ENCODE measurements at regions of chr3 and their contacts with region 1.

Region 1: GRCh38 chr3:42247576-42248027 is 18.4 kb downstream of the CCK start:
- DNase-seq: peak; percentile 49 to 79 (median 58)
- ATAC-seq: peak; percentile 79
- H3K4me3 ChIP-seq: no peak overlapping the region
- H3K4me3 Mint-ChIP-seq: peak overlapping the region; percentile 0
- H3K27ac ChIP-seq: no peak overlapping the region
- H3K27ac Mint-ChIP-seq: no peak overlapping the region
- H3K4me1 ChIP-seq: peaks cover 9% of the 10 kb centered on the region
- H3K4me1 Mint-ChIP-seq: peaks cover 8% of the 10 kb centered on the region
- H3K27me3 ChIP-seq: peaks cover 2 to 7% of the 10 kb centered on the region in 2 experiments
- H3K27me3 Mint-ChIP-seq: peaks cover 12% of the 10 kb centered on the region
- CTCF ChIP-seq: peak; percentile 80

Region 2: DNA sequence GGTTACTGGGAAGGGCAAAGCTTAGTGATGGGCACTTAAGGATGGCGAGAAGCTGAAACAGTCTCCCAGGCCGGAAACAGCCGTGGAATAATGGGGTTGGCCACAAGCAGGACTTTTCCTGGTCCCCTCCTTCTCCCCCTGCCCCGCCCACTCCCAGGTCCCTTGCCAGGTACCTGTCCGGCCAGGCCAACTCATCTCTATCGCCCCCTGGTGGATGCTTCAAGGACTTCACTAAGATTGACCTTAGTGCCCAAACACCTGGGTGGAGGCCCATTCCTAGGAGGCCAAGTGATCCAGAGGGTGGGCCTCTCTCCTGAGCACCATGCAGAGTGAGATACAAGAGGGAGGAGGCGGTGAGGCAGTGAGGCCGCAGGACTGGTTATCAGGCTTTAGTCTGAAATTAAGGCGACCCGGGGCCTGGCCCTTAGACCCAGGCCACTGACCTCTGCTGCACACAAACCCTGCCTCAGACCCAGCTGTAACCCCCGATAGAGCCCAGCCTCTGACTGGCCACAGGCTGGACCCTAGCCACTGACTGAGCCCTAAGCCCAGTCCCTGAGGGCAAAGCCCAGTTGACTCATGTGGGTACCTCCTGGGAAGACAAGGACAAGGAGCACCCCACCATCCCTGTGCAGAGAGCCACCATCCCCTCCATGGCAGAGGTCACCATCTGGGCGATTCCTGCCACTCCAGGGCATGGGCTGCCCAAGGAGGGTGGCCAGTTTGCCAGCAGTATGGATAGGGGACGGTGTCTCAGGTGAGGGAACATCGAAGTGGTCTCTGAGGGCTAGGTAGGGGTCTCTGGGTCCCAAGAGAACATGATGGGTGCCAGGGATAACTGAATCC is 292.5 kb after region 1 on chr3:
- CTCF ChIA-PET with region 1: no interaction called
- POLR2A ChIA-PET with region 1: no interaction called
- intact Hi-C with region 1: loop called (anchors 2 to 5 kb)
- DNase-seq: peak; percentile 39 to 81 (median 57)
- ATAC-seq: peak; percentile 71
- H3K4me3 ChIP-seq: no peak overlapping the region
- H3K4me3 Mint-ChIP-seq: no peak overlapping the region
- H3K27ac ChIP-seq: no peak overlapping the region
- H3K27ac Mint-ChIP-seq: peak overlapping the region; percentile 78
- H3K4me1 ChIP-seq: peaks cover 32% of the 10 kb centered on the region
- H3K4me1 Mint-ChIP-seq: peaks cover 29% of the 10 kb centered on the region
- H3K27me3 ChIP-seq: no peaks in the 10 kb centered on the region
- H3K27me3 Mint-ChIP-seq: no peaks in the 10 kb centered on the region
- CTCF ChIP-seq: peak; percentile 92

Region 3: GRCh38 chr3:42547401-42547945 is 299.9 kb after region 1 on chr3:
- CTCF ChIA-PET with region 1: no interaction called
- POLR2A ChIA-PET with region 1: no interaction called
- intact Hi-C with region 1: loop called (anchors 1 to 5 kb)
- DNase-seq: peak; percentile 44 to 83 (median 64)
- ATAC-seq: peak; percentile 79
- H3K4me3 ChIP-seq: no peak overlapping the region
- H3K4me3 Mint-ChIP-seq: no peak overlapping the region
- H3K27ac ChIP-seq: no peak overlapping the region
- H3K27ac Mint-ChIP-seq: no peak overlapping the region
- H3K4me1 ChIP-seq: peaks cover 8% of the 10 kb centered on the region
- H3K4me1 Mint-ChIP-seq: peaks cover 8% of the 10 kb centered on the region
- H3K27me3 ChIP-seq: no peaks in the 10 kb centered on the region
- H3K27me3 Mint-ChIP-seq: no peaks in the 10 kb centered on the region
- CTCF ChIP-seq: peak; percentile 98

Region 4: DNA sequence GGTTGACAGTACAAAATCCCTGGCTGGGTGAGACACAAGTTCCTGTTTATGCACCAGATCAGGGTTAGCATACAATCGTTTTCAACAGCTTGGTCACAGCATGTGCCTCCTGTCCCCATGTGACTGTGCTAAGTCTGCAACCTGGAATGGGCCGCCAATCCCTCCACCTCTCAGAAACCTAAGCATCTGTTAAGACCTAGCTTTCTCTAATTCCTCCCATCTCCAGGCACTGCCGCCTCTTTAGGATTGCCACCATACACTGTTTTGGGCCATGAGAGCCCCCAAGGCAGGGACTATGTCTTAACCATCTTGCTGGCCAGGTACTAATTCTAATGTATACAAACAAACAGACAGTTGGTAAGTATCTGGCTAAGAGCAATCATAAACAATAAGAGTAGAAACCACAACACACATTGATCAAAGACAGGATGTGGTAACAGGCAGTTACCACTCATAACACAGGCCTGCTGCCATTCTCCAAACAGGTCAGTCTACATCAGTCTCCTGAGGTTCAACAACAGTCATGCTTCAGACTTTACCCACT is 308.6 kb after region 1 on chr3:
- CTCF ChIA-PET with region 1: no interaction called
- POLR2A ChIA-PET with region 1: interaction called, 3 read pairs
- intact Hi-C with region 1: loop called in 1 of 2 experiments (anchors 1 kb)
- DNase-seq: peak; percentile 31 to 87 (median 46)
- ATAC-seq: peak; percentile 86
- H3K4me3 ChIP-seq: no peak overlapping the region
- H3K4me3 Mint-ChIP-seq: peak overlapping the region; percentile 54
- H3K27ac ChIP-seq: peak overlapping the region; percentile 58 to 73
- H3K27ac Mint-ChIP-seq: peak overlapping the region; percentile 92
- H3K4me1 ChIP-seq: peaks cover 41% of the 10 kb centered on the region
- H3K4me1 Mint-ChIP-seq: peaks cover 47% of the 10 kb centered on the region
- H3K27me3 ChIP-seq: no peaks in the 10 kb centered on the region
- H3K27me3 Mint-ChIP-seq: no peaks in the 10 kb centered on the region
- CTCF ChIP-seq: no peak

Region 5: DNA sequence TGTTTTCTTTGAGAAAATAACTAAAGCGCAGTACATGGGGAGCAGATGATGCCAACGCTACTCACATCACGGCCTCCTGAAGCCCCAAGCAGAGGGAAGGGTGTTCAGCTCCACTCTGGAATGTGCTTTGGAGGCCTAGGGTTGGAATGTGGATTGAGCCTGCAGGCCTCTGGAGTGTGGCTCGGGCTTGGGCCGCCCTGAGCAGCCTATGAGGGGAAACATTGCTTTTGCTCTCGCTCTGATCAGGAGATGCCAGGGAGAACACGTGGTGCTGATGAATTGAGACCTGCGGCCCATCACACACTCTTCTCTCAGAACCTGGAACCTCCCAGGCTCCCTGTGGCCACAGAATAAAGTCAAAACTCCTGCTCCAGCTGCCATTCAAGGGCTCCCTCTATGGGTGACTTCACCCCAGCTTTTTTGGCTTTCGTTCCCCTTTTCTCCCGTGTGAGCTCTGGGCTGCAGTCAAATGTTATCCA is 502.2 kb after region 1 on chr3:
- CTCF ChIA-PET with region 1: no interaction called
- POLR2A ChIA-PET with region 1: no interaction called
- intact Hi-C with region 1: loop called in 1 of 2 experiments (anchors 5 kb)
- DNase-seq: peak in 4 of 14 experiments; percentile 10 to 41 (median 30)
- ATAC-seq: no peak
- H3K4me3 ChIP-seq: no peak overlapping the region
- H3K4me3 Mint-ChIP-seq: no peak overlapping the region
- H3K27ac ChIP-seq: no peak overlapping the region
- H3K27ac Mint-ChIP-seq: no peak overlapping the region
- H3K4me1 ChIP-seq: peaks cover 49% of the 10 kb centered on the region
- H3K4me1 Mint-ChIP-seq: peaks cover 44% of the 10 kb centered on the region
- H3K27me3 ChIP-seq: no peaks in the 10 kb centered on the region
- H3K27me3 Mint-ChIP-seq: no peaks in the 10 kb centered on the region
- CTCF ChIP-seq: peak; percentile 21

Measured in CD4-positive, alpha-beta T cell (primary cell).